HEK293 (cell line): ENCODE measurements at regions of chr1 and their contacts with region 1.

Region 1: GRCh38 chr1:53953063-53953462 is 6.9 kb downstream of the LRRC42 start:
- H3K4me3 ChIP-seq: no peak overlapping the region
- H3K27ac ChIP-seq: no peak overlapping the region
- H3K4me1 ChIP-seq: no peaks in the 10 kb centered on the region
- CTCF ChIP-seq: 0 out of 2 replicates have a peak, but pooled peaks have one; percentile 17

Region 2: DNA sequence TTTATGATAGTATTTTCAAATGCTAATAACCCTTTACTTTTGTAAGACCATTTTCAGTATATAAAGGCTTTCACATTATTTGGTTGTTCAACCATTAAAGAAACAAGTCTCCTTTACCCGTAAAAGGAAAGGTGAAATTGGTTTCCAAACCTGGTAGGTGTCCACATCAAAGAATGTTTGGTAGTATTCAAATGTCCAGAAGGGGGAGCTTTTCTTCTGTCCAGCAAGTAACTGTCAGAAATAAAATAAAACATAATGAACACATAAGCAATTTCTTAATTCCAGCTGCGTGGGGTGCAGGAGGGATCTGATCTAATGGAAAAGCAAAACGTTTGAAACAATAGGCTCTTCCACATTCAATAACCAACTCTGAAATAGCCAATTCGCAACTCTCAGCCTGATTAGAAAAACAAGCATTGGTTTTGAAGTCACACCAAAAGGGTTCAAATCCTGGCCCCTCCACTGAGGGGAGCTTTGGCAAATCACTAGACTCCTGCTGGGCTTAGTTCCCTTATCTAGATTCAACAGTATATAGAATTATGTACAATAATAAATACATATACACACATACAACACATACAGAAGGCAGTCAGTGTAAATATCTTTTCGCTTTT is 74.5 kb before region 1 on chr1:
- CTCF ChIA-PET with region 1: interaction called, 56 read pairs
- POLR2A ChIA-PET with region 1: interaction called, 3 read pairs
- H3K4me3 ChIP-seq: no peak overlapping the region
- H3K27ac ChIP-seq: no peak overlapping the region
- H3K4me1 ChIP-seq: no peaks in the 10 kb centered on the region
- CTCF ChIP-seq: no peak